ENCODE measurements at regions of chr20 and their contacts with region 1.

Region 1: DNA sequence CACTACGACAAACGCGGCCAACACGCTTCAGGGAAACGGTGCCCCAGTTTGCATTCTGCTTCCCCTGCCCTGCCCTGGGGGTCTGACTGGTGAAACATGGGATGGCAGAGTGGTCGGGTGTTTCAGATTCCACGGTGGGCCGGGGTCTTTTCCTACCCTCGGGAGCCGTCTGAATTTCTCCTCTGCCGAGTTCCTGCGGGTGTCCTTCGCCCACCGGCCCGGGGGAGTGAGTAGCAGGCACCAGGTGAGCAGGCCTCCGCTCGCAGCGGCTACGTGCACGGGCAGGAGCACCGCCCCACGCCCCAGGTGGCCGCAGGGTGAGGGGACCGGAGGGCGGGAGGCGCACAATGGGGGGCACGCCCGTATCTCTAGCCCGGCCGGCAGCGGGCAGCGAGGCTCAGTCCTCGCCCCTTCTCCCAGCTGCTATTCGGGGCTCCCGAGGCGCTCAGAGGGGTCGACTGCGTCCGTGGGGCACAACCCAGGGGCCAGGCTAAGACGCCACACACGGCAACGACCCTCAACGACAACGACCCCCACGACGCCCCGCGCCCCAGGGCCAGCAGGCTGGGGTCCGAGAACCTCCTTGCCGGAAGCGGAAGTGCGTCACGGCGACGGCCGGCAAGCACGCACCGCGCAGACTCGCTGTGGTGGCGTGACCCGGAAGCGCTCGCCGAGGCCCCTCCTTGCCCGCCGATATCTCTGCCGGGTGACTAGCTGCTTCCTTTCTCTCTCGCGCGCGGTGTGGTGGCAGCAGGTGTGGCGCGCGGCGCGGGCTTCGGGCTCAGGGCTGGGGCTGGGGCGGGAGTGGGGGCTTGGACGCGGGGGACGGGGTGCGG is at the start of gene RPS21:
- DNase-seq: peak; percentile 97 to 98
- ATAC-seq: peak; percentile 94
- H3K4me3 ChIP-seq: peak within 1 kb of the TSS; percentile 55 to 66
- H3K27ac ChIP-seq: peak within 1 kb of the TSS; percentile 5 to 19
- H3K4me1 ChIP-seq: no peaks in the 10 kb centered on the region
- H3K27me3 ChIP-seq: no peaks in the 10 kb centered on the region
- total RNA-seq, gene RPS21: 965 to 1,002 TPM

Region 2: GRCh38 chr20:61705386-61706258 is 681.0 kb before region 1 on chr20:
- intact Hi-C with region 1: no loop called
- DNase-seq: no peak
- ATAC-seq: no peak
- H3K4me3 ChIP-seq: no peak overlapping the region
- H3K27ac ChIP-seq: no peak overlapping the region
- H3K4me1 ChIP-seq: no peaks in the 10 kb centered on the region
- H3K27me3 ChIP-seq: no peaks in the 10 kb centered on the region

Region 3: DNA sequence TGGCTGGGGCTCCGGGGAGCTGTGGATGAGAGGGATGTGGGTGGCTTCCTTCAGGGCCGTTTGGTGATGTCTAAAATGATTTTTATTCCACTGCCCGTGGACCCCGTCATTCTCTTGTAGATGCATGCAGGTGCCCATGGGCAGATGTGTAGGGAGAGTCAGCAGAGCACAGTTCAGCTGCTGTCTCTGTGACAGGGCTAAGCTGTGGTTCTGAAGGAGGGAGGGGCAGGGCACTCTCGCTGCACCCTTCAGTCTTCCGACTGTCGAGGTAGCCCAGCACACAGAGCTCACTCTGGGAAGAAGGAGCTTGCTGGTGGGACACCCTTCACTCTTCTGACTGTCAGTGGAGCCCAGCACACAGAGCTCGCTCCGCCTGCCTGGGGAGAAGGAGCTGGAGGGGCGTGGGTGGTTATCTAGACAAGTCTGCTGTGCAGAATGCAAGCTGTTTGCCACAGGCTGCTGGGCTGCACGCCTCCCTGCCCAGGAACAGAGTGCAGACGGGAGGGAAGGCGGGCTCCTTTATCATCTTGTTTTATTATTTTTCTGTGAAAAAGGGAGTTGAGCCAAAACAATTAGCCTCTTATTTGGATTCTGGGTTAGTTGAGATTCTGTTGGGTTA is 112.2 kb before region 1 on chr20:
- intact Hi-C with region 1: no loop called
- DNase-seq: no peak
- ATAC-seq: no peak
- H3K4me3 ChIP-seq: no peak overlapping the region
- H3K27ac ChIP-seq: no peak overlapping the region
- H3K4me1 ChIP-seq: no peaks in the 10 kb centered on the region
- H3K27me3 ChIP-seq: no peaks in the 10 kb centered on the region

Region 4: DNA sequence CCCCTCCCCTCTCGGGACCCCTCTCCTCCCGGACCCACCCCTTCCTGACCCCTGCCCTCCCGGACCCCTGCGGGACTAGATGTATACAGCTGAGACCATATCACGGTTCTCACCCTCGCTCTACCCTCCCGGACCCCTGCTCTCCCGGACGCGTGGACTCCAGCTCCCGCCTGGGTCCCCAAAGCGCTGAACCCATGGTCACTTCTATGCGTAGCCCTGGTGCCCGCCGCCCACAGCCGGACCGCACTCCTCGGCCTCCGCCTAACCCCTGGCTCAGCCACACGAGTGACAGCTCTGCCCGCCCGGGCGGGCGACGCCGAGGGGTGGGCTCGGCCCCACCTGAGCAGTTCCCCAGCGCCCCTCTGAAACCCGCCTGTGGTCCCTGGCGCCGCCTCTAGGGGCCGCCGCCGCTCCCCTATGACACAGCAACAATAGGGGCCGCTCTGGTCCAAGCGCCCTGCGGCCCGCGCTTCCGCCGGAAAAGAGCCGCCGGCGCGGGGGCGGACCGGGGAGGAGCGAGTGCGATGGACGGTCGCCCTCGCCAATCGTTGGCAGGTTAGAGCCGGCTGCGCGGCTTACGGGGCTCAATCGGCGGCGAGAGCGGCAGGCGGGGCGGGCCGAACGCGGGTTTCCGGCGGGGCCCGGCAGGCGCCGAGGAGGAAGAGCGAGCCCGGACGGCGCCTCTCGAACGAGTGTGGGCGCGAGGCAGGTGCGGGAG is 84.1 kb before region 1 on chr20 and contains the start of gene ADRM1:
- intact Hi-C with region 1: loop called (anchors 2 kb)
- DNase-seq: peak; percentile 97 to 98
- ATAC-seq: peak; percentile 95
- H3K4me3 ChIP-seq: peak within 1 kb of the TSS; percentile 86 to 87
- H3K27ac ChIP-seq: peak within 1 kb of the TSS; percentile 58 to 94
- H3K4me1 ChIP-seq: no peaks in the 10 kb centered on the region
- H3K27me3 ChIP-seq: no peaks in the 10 kb centered on the region
- total RNA-seq, gene ADRM1: 56.1 to 61.8 TPM

Region 5: DNA sequence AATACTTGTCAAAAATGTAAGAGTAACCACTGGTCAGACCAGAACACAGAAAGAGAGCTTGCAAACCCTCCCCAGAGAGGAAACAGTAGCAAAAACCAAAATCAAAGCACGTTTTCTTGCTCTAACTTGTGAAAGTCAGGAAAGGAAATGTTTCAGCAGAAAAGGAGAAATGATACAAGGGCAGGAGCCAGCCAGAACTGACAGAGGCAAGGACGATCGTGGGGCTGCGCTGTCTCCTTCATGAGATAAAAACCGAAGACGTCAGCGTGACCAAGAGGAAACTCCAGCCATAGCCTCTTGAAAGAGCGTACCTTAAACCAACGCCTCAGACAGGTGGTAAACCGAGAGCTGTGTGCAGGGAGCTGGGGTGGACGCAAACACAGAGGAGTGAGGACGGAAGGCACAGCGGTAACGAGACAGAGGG is 46.9 kb before region 1 on chr20:
- intact Hi-C with region 1: loop called in 1 of 2 experiments (anchors 5 kb)
- DNase-seq: no peak
- ATAC-seq: no peak
- H3K4me3 ChIP-seq: no peak overlapping the region
- H3K27ac ChIP-seq: no peak overlapping the region
- H3K4me1 ChIP-seq: no peaks in the 10 kb centered on the region
- H3K27me3 ChIP-seq: no peaks in the 10 kb centered on the region

Region 6: DNA sequence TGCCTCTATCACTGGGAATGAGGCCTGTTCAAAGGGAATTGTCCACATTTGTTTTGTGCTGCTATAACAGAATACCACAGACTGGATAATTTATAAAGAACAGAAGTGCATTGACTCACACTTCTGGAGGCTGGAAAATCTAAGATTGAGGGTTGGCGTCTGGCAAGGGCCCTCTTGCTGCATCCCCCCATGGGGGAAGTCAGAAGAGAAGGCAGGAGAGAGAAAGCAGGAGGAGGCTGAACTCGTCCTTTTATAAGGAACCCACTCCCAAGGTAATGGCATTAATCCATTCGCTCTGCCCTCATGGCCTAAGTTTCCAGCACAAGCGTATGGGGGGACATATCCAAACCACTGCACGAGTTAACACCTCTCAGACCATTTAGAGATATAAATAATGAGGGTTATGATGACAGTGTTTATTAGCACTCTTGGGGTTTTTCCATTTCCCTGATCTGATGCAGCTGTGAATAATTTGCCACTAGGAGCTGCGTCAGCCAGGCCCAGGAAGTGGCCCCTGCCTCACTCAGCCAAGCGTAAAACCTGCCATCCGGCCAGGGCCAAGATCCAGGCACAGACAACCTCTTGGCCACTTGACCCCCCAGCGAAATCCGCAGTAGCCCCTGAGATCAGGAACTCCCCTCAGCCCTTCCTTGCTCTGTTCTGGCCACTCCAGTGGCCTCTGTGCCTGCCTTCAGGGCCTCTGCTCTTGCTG is 241.5 kb after region 1 on chr20:
- intact Hi-C with region 1: no loop called
- DNase-seq: no peak
- ATAC-seq: no peak
- H3K4me3 ChIP-seq: no peak overlapping the region
- H3K27ac ChIP-seq: no peak overlapping the region
- H3K4me1 ChIP-seq: no peaks in the 10 kb centered on the region
- H3K27me3 ChIP-seq: no peaks in the 10 kb centered on the region